KBM-7 (cell line): ENCODE measurements at regions of chr5 and their contacts with region 1.

Region 1: DNA sequence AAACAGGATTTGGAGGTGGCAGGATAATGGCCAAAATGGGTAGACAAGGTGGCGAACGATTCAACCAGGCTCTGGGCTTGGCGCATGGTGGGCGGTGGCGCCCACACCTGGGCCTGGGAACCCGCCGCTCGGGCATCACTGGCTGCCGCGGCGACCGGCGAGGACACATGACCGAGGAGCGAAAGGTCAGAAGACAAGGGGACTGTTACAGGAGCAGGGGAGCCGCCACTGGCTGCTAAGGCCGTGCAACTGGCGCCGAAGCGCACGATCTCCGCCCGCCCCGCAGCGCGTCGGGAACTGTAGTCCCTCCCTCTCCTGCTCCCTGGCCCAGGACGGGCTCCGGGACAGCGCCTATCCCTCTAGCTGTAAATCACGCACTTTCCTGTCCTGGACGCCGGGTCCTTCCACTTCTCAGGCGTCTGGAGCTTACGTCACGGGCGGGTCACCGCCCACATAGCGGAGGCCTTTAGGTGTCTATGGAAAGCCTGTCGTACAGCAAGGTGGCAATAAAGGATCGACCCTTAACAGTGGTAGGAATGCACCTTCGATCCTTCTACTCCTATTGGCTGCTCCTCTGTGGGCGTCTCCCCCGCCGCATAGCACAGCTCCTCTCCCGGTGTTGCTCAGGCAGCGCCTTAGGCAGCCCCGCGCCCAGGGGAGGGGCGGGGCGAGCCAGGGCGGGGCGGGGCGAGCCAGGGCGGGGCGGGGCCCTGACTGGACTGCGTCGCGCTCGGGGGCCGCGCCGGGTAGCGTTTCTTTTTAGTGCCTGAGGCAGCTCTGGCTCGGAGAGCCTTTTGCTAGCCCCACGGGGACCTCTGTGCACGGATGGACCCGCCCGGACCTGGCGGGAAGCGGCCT is at the start of gene ICE1:
- DNase-seq: peak; percentile 96

Region 2: DNA sequence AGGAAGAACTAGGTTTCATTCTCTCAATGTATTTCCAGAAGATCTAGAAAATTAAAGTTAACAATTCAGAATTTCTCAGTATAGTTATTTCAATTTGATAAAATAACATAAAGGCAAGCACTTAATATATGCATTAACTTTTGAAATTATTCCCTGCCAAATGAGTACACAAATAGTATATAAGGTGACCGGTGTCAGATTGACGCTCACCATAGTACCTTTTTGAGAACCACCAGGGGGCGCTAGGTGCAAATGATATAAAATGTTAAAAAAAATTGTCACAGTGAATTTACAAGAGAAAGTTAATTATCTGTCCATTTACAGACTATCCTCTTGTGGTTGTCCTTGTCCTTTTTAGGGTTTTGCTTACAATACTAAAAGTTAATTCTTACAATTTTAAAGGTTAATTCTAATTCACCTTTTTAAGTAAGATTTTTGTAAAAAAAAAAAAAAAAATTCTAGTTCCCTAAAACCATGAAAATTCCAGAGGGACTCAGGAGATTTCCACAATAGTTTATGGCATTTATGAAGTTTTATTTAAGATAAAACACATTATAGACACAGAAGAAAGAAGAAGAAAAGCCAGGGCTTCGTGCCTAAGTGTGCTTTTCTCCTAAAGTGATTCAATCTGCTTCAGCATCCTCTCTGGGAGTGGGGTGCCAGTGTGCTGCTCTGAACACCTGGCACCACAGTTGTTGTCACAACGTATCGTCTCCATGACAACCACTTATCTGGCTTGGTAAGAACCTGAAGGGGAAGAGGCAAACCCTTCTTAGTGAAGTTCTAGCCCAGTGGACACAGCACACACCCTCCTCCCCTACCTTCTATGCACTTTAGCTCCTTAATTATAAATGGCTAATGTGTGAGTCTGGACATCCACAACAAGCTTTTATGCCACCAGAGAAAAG is 280.3 kb before region 1 on chr5:
- in situ Hi-C with region 1: loop called (anchors 25 kb)
- DNase-seq: peak; percentile 58